T-cell (primary cell): ENCODE measurements at regions of chr18 and their contacts with region 1.

Region 1: GRCh38 chr18:75293591-75293990 is 83.0 kb downstream of the TSHZ1 start:
- DNase-seq: no peak
- ATAC-seq: no peak
- H3K4me3 ChIP-seq: no peak overlapping the region
- H3K4me3 Mint-ChIP-seq: no peak overlapping the region
- H3K27ac ChIP-seq: no peak overlapping the region
- H3K27ac Mint-ChIP-seq: no peak overlapping the region
- H3K4me1 ChIP-seq: no peaks in the 10 kb centered on the region
- H3K4me1 Mint-ChIP-seq: peaks cover 0 to 13% (median 2%) of the 10 kb centered on the region in 3 donors
- H3K27me3 ChIP-seq: no peaks in the 10 kb centered on the region
- H3K27me3 Mint-ChIP-seq: no peaks in the 10 kb centered on the region

Region 2: GRCh38 chr18:74264303-74265020 is 1029.1 kb before region 1 on chr18:
- CTCF ChIA-PET with region 1: no interaction called
- POLR2A ChIA-PET with region 1: interaction called in 1 of 2 experiments, 12 read pairs
- DNase-seq: no peak
- ATAC-seq: no peak
- H3K4me3 ChIP-seq: no peak overlapping the region
- H3K4me3 Mint-ChIP-seq: no peak overlapping the region
- H3K27ac ChIP-seq: no peak overlapping the region
- H3K27ac Mint-ChIP-seq: no peak overlapping the region
- H3K4me1 ChIP-seq: no peaks in the 10 kb centered on the region
- H3K4me1 Mint-ChIP-seq: peaks cover 1 to 4% (median 2%) of the 10 kb centered on the region in 3 donors
- H3K27me3 ChIP-seq: no peaks in the 10 kb centered on the region
- H3K27me3 Mint-ChIP-seq: no peaks in the 10 kb centered on the region

Region 3: DNA sequence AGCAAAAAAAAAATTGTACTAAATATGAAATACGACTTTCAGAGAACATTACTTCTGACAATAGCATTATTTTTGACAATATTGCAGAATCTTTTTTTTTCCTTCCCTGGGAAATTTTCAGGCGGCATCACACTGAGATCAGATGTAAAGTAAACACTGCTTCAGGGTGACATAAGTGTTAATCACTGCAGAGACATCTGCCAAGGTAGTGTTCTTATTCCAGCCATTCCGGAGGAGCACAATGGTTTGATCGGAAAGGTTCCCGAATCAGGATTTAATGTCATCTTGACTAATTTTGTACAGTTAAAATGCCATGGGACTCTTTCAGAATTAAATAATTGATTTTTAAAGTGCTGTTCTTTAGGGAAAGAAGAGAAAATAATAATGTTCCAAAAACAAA is 1472.1 kb after region 1 on chr18:
- CTCF ChIA-PET with region 1: no interaction called
- POLR2A ChIA-PET with region 1: no interaction called
- DNase-seq: no peak
- ATAC-seq: no peak
- H3K4me3 ChIP-seq: no peak overlapping the region
- H3K4me3 Mint-ChIP-seq: no peak overlapping the region
- H3K27ac ChIP-seq: no peak overlapping the region
- H3K27ac Mint-ChIP-seq: no peak overlapping the region
- H3K4me1 ChIP-seq: peaks cover 0 to 10% of the 10 kb centered on the region in 2 experiments
- H3K4me1 Mint-ChIP-seq: peaks cover 15 to 31% (median 23%) of the 10 kb centered on the region in 3 donors
- H3K27me3 ChIP-seq: peaks cover 0 to 9% of the 10 kb centered on the region in 2 experiments
- H3K27me3 Mint-ChIP-seq: peaks cover 0 to 2% of the 10 kb centered on the region in 2 donors